ENCODE measurements at regions of chr2 and their contacts with region 1.

Region 1: GRCh38 chr2:131016826-131017741 is 76.2 kb downstream of the FAM168B start:
- DNase-seq: peak; percentile 99
- H3K4me3 Mint-ChIP-seq: peak overlapping the region; percentile 71
- H3K27ac Mint-ChIP-seq: peak overlapping the region; percentile 97
- H3K4me1 Mint-ChIP-seq: peaks cover 35% of the 10 kb centered on the region
- H3K27me3 Mint-ChIP-seq: no peaks in the 10 kb centered on the region
- CTCF ChIP-seq: no peak

Region 2: GRCh38 chr2:130231656-130232055 is 785.4 kb before region 1 on chr2:
- CTCF ChIA-PET with region 1: no interaction called
- POLR2A ChIA-PET with region 1: no interaction called
- intact Hi-C with region 1: no loop called
- DNase-seq: no peak
- H3K4me3 Mint-ChIP-seq: no peak overlapping the region
- H3K27ac Mint-ChIP-seq: no peak overlapping the region
- H3K4me1 Mint-ChIP-seq: no peaks in the 10 kb centered on the region
- H3K27me3 Mint-ChIP-seq: peaks cover 11% of the 10 kb centered on the region
- CTCF ChIP-seq: no peak

Region 3: DNA sequence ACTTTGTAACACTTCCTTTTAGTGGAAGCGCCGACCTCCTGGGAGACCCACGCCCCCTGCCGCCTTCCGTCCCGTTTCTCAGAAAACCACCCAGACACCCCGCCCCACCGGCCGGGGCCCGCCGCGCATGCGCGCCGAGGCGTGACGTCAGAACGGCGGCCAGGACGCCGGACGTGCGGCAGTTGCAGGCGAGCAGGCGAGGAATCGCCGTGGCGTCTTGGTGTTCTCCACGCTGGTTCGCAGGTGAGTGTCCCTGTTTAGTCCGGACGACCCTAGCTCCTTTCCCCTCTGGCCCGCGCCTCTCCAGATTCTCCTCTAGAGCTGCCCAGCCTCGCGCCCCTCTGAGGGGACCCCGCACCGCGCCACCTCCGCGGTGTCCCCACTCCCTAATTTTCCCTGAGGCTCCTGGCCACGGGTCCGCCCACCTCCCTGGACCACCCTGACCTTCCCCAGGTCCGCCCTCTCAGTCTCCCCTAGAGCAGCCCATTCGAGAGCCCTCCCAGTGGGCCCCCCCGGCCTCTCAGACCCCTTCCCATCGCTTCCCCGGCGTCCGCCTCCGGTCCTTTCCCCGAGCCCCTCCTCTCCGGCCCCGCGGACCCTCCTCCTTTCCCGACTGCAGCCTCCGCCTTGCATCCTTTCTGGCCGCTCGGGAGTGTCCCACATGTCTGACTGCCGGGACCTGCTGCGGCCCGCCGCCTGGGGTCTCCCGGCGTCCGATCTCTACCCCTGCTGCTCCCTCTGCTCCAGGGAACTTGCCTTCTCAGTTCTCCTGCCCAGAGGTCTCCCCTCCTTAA is 88.3 kb after region 1 on chr2 and contains the start of gene PLEKHB2:
- CTCF ChIA-PET with region 1: interaction called, 4 read pairs
- POLR2A ChIA-PET with region 1: interaction called, 18 read pairs
- intact Hi-C with region 1: no loop called
- DNase-seq: peak; percentile 87
- H3K4me3 Mint-ChIP-seq: peak within 1 kb of the TSS; percentile 87
- H3K27ac Mint-ChIP-seq: peak within 1 kb of the TSS; percentile 92
- H3K4me1 Mint-ChIP-seq: peaks cover 15% of the 10 kb centered on the region
- H3K27me3 Mint-ChIP-seq: no peaks in the 10 kb centered on the region
- CTCF ChIP-seq: no peak
- total RNA-seq, gene PLEKHB2: 57.6 and 78.1 TPM in 2 replicates

Region 4: DNA sequence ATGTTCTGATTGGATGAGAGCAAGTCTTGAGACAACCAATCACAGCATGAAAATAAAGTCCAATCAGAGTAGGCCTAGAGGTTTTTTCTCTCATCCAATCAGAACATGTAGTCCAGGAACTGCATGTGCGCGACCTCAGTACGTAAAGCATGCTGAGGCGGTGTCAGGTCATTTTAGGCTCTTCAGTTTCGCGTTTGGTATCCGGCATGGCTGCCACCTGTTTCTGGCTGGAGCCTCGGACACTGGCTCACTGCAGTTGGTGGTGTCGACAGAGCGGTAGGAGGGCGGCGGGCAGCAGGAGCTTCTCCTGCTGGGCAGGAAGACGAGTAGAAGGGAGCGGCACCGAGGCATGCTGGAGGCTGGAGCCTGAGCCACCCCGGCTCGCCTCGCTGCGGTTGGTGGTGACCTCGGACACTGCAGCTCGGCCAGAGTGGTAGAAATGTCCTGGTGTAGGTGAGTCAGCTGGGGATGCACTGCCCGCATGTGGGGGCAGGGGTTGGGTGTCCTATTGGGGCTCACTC is 526.3 kb after region 1 on chr2:
- CTCF ChIA-PET with region 1: no interaction called
- POLR2A ChIA-PET with region 1: no interaction called
- intact Hi-C with region 1: no loop called
- DNase-seq: no peak
- H3K4me3 Mint-ChIP-seq: no peak overlapping the region
- H3K27ac Mint-ChIP-seq: no peak overlapping the region
- H3K4me1 Mint-ChIP-seq: no peaks in the 10 kb centered on the region
- H3K27me3 Mint-ChIP-seq: peaks cover 83% of the 10 kb centered on the region
- CTCF ChIP-seq: no peak